Posterior cingulate gyrus (tissue), 11 donors: ENCODE measurements at regions of chr12 and their contacts with region 1.

Region 1: GRCh38 chr12:29519585-29520182 is 22.2 kb upstream of the OVCH1 start:
- DNase-seq: peak in 2 of 10 donors; percentile 19 to 24

Region 2: GRCh38 chr12:29309320-29309902 is 210.3 kb before region 1 on chr12:
- intact Hi-C with region 1: loop called (anchors 5 kb)
- DNase-seq: peak in 1 of 10 donors; percentile 41

Region 3: GRCh38 chr12:30515351-30515750 is 995.7 kb after region 1 on chr12:
- intact Hi-C with region 1: loop called (anchors 10 kb)
- DNase-seq: no peak